ENCODE measurements at regions of chr6 and their contacts with region 1.

Region 1: GRCh38 chr6:39543095-39543494 is 182.1 kb downstream of the KIF6 start:
- DNase-seq: peak; percentile 72
- ATAC-seq: peak; percentile 97

Region 2: DNA sequence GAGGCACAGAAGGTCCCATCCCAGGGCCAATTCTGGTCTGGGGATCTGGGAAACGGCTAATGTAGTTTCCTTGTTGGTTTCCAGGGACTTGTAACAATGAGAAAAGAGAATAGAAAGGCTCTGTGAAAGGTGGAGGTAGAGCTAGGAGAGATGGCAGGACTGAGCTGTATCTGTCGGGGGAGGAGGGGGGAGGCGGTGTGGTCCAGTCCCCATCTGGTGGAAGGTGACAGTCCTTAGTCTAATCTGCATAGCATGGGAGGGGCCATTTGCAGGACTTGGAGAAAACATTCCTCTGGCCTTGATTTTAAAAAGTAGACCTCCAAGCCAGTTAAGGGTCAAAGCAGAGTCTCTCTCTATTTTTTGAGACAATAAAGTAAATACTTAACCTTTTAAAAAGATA is 690.9 kb before region 1 on chr6:
- intact Hi-C with region 1: no loop called
- DNase-seq: no peak
- ATAC-seq: no peak

Region 3: DNA sequence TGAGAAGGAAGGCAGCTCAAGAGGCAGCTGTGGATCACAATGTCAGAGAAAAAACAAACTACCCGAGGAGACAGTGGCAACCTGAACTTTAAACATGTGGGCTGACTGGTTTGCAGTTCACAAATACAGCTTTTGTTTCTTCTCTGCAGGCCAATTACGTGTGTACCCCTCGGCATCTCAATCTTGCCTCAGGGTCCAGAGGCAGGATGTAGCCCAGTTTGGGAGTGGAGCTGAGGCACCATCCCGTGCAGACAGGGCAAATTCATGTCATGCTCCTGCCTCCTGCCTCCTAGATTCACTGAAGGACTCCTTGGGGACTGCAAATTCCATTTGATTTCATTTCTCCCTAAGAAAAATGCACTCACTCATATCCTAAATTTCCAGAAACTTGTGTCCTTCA is 126.4 kb before region 1 on chr6:
- intact Hi-C with region 1: loop called (anchors 10 kb)
- DNase-seq: no peak
- ATAC-seq: no peak

Region 4: DNA sequence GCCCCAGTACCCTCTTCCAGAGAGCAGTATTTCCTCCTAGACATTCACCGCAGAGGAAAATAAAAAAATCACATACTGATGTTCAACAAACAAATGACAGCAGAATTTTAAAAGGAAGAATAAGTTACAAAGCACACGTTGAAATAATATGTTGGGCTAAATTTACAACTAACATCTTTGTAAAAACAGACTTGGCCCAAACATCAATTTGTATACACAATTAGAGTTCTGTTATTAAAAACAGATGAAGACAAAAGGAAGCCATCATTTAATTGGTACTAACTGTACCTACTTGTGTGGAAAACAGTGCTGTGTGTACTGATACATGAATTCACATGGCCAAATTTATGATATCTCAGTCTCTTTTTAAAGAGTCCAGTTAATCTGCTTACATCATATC is 135.8 kb after region 1 on chr6:
- intact Hi-C with region 1: no loop called
- DNase-seq: no peak
- ATAC-seq: no peak